ENCODE measurements at regions of chr12 and their contacts with region 1.

Region 1: DNA sequence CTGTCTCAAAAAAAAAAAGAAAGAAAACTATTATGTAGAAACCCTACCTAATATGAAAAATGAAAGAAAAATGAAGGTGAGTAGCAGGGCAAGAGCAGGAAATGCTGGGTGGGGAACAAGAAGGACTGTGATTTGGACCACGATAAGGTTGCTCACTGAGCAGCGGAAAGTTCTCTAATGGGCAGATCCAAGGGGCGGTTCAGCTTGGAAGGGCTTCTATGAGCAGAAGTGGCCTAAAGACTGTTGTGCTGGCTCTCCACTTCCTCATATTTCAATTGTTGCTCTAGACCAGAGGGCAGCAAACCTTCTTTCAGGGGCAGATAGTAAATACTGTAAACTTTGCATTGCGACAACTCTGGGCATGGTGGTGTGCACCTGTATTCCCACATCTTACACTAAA is 16.3 kb upstream of the NFYB start:
- DNase-seq: no peak
- ATAC-seq: peak in 1 of 8 donors; percentile 68
- H3K4me3 ChIP-seq: no peak overlapping the region
- H3K27ac ChIP-seq: no peak overlapping the region
- H3K4me1 ChIP-seq: peaks cover 0 to 9% (median 0%) of the 10 kb centered on the region in 9 donors
- H3K27me3 ChIP-seq: no peaks in the 10 kb centered on the region
- CTCF ChIP-seq: no peak

Region 2: DNA sequence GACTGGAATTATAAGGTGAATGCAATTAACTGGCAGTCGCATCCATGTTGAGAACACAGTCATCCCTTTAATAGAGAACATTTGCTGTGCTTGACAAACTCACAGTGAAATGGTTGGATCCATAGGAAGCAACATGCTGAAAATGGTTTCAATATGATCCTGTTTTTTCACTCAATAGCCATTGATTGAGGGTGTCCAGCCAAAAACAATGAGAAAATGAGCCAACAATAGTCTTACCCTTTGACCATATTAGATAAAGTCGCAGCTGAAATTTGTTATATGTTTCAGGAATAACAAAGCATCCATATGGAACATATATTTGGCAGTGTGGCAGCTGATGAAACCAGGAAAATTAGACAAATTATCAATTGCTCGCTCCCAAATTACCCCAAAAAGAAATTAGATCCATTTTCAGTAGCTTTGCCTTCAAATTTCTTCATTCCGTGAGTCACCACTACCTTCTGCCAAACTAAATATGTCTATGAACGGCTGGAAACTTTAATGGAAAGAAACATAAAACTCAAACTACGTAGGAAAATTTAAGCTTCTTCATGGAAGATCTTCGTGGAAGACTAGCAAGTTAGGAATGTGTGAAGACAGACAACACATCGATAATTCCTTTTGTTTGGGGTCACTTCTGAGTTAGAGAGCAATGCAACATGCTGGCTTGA is 1691.4 kb before region 1 on chr12:
- intact Hi-C with region 1: loop called in 1 of 10 experiments (anchors 10 kb)
- DNase-seq: no peak
- ATAC-seq: peak in 5 of 8 donors; percentile 20 to 65 (median 44)
- H3K4me3 ChIP-seq: no peak overlapping the region
- H3K27ac ChIP-seq: peak overlapping the region in 6 of 10 donors; percentile 33 to 52 (median 48)
- H3K4me1 ChIP-seq: peaks cover 0 to 10% (median 0%) of the 10 kb centered on the region in 9 donors
- H3K27me3 ChIP-seq: no peaks in the 10 kb centered on the region
- CTCF ChIP-seq: no peak

Region 3: DNA sequence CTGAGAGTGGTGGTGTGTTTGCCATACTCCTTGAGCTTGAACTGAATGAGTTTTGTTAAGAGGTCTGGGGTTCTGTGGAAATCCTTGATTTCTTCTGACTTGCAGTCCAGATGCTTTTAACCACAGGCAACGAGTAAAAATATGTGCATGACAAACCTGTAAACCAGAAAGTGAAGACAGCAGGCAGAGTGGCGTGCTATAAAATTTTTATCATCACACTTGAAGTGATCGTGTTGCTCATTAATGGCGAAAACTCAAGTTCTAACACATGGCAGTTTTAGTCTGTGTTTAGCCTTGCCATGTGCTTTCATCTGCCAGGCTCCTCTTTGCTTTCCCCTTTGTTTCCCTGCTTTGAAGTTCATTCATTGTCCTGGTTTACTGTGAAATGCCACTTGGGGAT is 89.3 kb after region 1 on chr12:
- intact Hi-C with region 1: no loop called
- DNase-seq: no peak
- ATAC-seq: peak in 1 of 8 donors; percentile 42
- H3K4me3 ChIP-seq: no peak overlapping the region
- H3K27ac ChIP-seq: peak overlapping the region in 1 of 10 donors; percentile 13
- H3K4me1 ChIP-seq: peaks cover 0 to 11% (median 0%) of the 10 kb centered on the region in 9 donors
- H3K27me3 ChIP-seq: no peaks in the 10 kb centered on the region
- CTCF ChIP-seq: no peak